ENCODE measurements at regions of chr2 and their contacts with region 1.

Region 1: GRCh38 chr2:84925724-84926376 is 20.4 kb downstream of the TMSB10 start:
- DNase-seq: peak; percentile 97
- H3K4me3 Mint-ChIP-seq: peak overlapping the region; percentile 71
- H3K27ac Mint-ChIP-seq: peak overlapping the region; percentile 28
- H3K4me1 Mint-ChIP-seq: peaks cover 32% of the 10 kb centered on the region
- H3K27me3 Mint-ChIP-seq: no peaks in the 10 kb centered on the region
- CTCF ChIP-seq: peak; percentile 96

Region 2: GRCh38 chr2:83859553-83859952 is 1066.3 kb before region 1 on chr2:
- CTCF ChIA-PET with region 1: no interaction called
- POLR2A ChIA-PET with region 1: no interaction called
- intact Hi-C with region 1: no loop called
- DNase-seq: no peak
- H3K4me3 Mint-ChIP-seq: no peak overlapping the region
- H3K27ac Mint-ChIP-seq: no peak overlapping the region
- H3K4me1 Mint-ChIP-seq: no peaks in the 10 kb centered on the region
- H3K27me3 Mint-ChIP-seq: no peaks in the 10 kb centered on the region
- CTCF ChIP-seq: no peak

Region 3: DNA sequence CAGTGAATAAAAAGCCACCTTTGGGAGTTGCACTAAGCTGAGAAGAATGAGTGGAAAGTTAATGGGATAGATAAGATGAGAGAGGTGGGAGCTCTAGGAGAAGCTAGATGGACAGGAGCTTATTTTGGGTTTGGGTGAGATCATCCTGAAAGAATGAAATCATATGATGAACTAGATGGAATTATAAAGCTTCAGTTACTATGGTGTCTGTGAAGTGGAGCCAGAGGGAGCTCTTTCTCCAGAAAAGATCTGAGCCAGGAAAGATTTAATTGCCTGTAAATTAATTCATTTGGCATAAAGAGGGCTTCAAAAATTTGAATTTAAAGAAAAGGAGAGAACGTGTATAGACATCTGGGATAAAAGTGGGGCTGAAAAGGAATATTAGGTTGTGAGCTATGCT is 399.3 kb before region 1 on chr2:
- CTCF ChIA-PET with region 1: interaction called, 12 read pairs
- POLR2A ChIA-PET with region 1: no interaction called
- intact Hi-C with region 1: no loop called
- DNase-seq: no peak
- H3K4me3 Mint-ChIP-seq: no peak overlapping the region
- H3K27ac Mint-ChIP-seq: no peak overlapping the region
- H3K4me1 Mint-ChIP-seq: no peaks in the 10 kb centered on the region
- H3K27me3 Mint-ChIP-seq: no peaks in the 10 kb centered on the region
- CTCF ChIP-seq: peak; percentile 25

Region 4: GRCh38 chr2:84888401-84889276 is 37.2 kb before region 1 on chr2:
- CTCF ChIA-PET with region 1: interaction called, 18 read pairs
- POLR2A ChIA-PET with region 1: interaction called, 12 read pairs
- intact Hi-C with region 1: no loop called
- DNase-seq: peak; percentile 59
- H3K4me3 Mint-ChIP-seq: peak overlapping the region; percentile 51
- H3K27ac Mint-ChIP-seq: peak overlapping the region; percentile 83
- H3K4me1 Mint-ChIP-seq: peaks cover 6% of the 10 kb centered on the region
- H3K27me3 Mint-ChIP-seq: no peaks in the 10 kb centered on the region
- CTCF ChIP-seq: no peak

Region 5: GRCh38 chr2:84912984-84913383 is 12.9 kb before region 1 on chr2:
- CTCF ChIA-PET with region 1: interaction called, 39 read pairs
- POLR2A ChIA-PET with region 1: interaction called, 189 read pairs
- intact Hi-C with region 1: no loop called
- DNase-seq: no peak
- H3K4me3 Mint-ChIP-seq: no peak overlapping the region
- H3K27ac Mint-ChIP-seq: no peak overlapping the region
- H3K4me1 Mint-ChIP-seq: peaks cover 19% of the 10 kb centered on the region
- H3K27me3 Mint-ChIP-seq: no peaks in the 10 kb centered on the region
- CTCF ChIP-seq: no peak

Region 6: DNA sequence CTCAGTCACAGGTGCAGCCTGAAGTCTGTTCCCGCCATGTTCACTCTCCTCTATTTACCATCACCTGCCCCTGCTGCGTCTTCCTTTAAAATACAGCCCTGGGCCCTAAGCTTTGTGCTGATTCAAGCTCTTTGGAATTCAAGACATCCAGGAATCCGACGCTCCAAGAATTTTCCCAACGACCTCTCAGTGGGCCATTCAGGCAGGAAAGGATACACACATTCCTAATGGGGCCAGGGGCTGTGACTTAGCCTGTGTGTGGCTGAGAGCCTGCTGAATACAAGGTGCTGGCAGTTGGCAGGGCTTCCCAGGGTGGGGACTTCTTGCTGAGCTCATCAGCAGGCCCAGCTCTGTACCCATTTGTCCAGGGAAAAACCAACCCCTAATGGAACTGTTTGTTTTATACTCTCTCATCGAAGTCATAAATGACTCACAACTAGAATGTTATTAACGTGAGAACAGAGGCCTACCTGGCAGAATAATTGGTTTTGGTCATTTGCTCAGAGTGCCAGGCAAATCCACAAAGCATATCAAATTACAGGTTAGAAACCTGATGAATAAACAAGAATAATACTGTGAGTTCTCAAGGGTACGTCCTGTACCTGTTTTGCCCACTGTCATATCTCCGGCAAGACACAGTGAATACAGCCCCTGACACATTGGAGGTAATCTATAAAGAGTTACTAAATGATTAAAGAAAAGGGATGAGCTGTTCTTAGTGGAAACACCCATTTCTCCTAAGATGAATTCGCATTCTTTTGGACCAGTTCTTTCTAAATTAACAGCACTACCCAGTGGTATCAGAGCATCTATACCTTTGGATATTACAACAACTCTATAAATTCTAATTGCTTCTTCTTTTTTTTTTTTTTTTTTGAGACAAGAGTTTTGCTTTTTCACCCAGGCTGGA is 32.5 kb after region 1 on chr2:
- CTCF ChIA-PET with region 1: interaction called, 23 read pairs
- POLR2A ChIA-PET with region 1: interaction called, 42 read pairs
- intact Hi-C with region 1: loop called (anchors 1 kb)
- DNase-seq: peak; percentile 97
- H3K4me3 Mint-ChIP-seq: peak overlapping the region; percentile 54
- H3K27ac Mint-ChIP-seq: peak overlapping the region; percentile 98
- H3K4me1 Mint-ChIP-seq: peaks cover 37% of the 10 kb centered on the region
- H3K27me3 Mint-ChIP-seq: no peaks in the 10 kb centered on the region
- CTCF ChIP-seq: no peak

Region 7: GRCh38 chr2:85017411-85018048 is 91.7 kb after region 1 on chr2:
- CTCF ChIA-PET with region 1: interaction called, 11 read pairs
- POLR2A ChIA-PET with region 1: interaction called, 15 read pairs
- intact Hi-C with region 1: loop called (anchors 1 kb)
- DNase-seq: no peak
- H3K4me3 Mint-ChIP-seq: no peak overlapping the region
- H3K27ac Mint-ChIP-seq: no peak overlapping the region
- H3K4me1 Mint-ChIP-seq: peaks cover 22% of the 10 kb centered on the region
- H3K27me3 Mint-ChIP-seq: no peaks in the 10 kb centered on the region
- CTCF ChIP-seq: peak; percentile 26

Region 8: DNA sequence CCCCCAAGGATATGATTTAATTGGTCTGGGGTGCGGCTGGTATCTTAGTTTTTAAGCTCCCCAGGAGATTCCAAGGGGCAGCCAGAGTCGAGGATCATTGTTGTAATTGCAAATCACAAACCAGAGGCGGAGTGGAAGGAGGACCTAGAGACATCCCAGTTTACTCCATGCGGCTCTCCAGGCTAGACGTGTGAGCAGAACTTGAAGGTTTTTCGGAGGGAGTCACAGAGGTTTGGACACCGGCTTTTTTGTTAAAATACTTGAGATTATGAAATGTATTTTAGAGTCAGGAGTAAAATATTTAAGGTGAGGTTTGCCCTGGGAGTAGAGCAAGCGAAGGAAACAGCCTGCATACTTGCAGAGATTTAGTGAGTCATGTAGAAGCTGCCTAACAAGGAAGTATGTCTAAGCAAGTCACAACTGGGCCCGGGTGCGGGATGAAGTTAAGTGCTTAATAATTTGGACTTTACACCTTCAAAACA is 362.4 kb after region 1 on chr2:
- CTCF ChIA-PET with region 1: interaction called, 18 read pairs
- POLR2A ChIA-PET with region 1: interaction called, 7 read pairs
- intact Hi-C with region 1: loop called (anchors 1 kb)
- DNase-seq: peak; percentile 79
- H3K4me3 Mint-ChIP-seq: peak overlapping the region; percentile 56
- H3K27ac Mint-ChIP-seq: peak overlapping the region; percentile 92
- H3K4me1 Mint-ChIP-seq: peaks cover 31% of the 10 kb centered on the region
- H3K27me3 Mint-ChIP-seq: no peaks in the 10 kb centered on the region
- CTCF ChIP-seq: no peak